ENCODE measurements at regions of chr1 and their contacts with region 1.

Region 1: DNA sequence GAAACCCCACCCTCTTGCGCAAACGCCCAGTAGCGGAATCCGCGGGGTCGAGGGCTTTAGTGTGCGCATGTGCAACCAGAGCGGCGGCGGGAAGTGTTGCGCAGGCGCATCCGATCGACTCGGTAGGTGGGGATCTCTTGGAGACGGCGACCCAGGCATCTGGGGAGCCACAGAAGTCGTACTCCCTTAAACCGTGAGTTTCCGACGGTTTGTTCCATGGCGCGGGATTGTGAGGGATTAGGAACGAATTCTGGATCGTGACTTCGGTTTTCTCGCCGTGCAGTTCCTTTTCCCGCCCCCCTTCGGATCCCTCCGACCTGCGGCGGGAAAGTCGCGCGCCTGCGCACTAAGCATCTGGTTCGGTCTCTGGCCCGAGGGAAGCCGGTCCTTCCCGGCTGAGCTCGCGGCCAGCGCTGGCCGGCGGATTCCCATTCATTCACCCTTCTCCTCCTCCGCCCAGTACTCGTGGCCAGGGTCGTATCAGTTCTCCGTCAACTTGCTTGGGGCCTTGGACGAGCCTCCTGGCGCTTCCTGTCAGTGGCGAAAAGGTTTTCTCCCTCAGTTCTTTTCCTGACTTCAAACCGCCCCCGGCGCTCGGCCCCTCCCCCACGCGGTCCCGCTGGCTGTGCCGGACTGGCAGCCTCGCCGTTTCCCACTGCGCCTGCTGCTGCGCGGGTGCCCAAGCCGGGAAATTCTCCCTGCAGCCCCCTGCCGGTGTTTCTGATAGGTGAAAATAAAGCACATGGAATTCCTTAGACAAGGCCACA is at the start of gene CDC7:
- DNase-seq: peak; percentile 87
- ATAC-seq: peak; percentile 92
- H3K4me3 ChIP-seq: peak within 1 kb of the TSS; percentile 59
- H3K27ac ChIP-seq: peak within 1 kb of the TSS; percentile 66
- H3K4me1 ChIP-seq: no peaks in the 10 kb centered on the region; the same call in 1 of the 2 replicates
- H3K27me3 ChIP-seq: no peaks in the 10 kb centered on the region
- CTCF ChIP-seq: peak; percentile 40
- POLR2A ChIP-seq: 0 out of 2 replicates have a peak, but pooled peaks have one; percentile 42
- RAD21 ChIP-seq: peak; percentile 25
- total RNA-seq, gene CDC7: 4.7 and 6.9 TPM in 2 replicates

Region 2: DNA sequence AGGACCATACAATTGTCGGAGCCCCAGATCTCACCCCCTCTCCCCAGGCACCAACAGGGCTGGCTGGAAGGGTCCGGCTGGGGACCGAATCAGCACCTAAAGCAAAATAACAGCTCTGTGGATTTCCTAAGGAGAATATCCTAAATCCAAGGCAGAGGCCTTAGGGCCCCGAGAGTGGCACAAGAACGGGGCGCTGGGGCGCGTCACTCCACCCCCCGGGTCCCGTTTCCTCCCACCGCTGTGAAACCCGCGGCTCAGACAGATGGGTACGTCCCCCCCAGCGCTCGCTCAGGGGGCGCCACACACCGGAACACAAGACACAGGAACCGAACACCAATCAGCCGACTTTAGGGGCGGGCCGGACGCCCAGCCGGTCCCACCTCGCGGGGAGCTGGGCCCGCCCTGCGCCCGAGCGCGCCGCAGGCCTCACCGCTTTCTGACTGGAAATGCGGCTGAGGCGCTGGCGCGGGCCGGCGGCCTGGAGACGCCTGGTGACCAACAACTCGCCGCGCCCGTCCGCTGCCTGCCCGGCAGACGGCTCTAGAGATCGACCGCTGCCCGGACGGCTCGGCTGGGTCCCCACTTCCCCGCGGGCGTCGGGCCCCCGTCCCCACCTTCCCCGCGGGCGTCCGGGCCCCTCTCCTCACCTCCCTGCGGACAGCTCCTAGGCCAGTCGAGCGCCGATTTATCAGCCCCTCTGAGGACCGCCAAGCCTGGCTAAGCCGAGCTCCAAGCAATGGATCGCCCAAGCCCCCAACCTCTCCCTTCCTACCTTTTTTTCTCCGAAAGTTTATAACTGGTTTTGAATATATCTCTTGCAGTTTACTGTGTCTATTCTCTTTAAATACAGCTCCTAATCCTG is 96.6 kb before region 1 on chr1 and contains the start of gene HFM1:
- CTCF ChIA-PET with region 1: no interaction called
- POLR2A ChIA-PET with region 1: no interaction called
- dilution Hi-C with region 1: no loop called
- in situ Hi-C with region 1: no loop called
- intact Hi-C with region 1: loop called (anchors 1 kb)
- DNase-seq: peak; percentile 69
- ATAC-seq: peak; percentile 99
- H3K4me3 ChIP-seq: peak within 1 kb of the TSS; percentile 52
- H3K27ac ChIP-seq: no peak within 1 kb of the TSS; the same call in 1 of the 2 replicates
- H3K4me1 ChIP-seq: no peaks in the 10 kb centered on the region
- H3K27me3 ChIP-seq: no peaks in the 10 kb centered on the region; the same call in 1 of the 2 replicates
- CTCF ChIP-seq: no peak
- POLR2A ChIP-seq: no peak
- RAD21 ChIP-seq: no peak
- total RNA-seq, gene HFM1: 0.18 and 0.83 TPM in 2 replicates

Region 3: GRCh38 chr1:92298573-92299476 is 797.9 kb after region 1 on chr1 and contains the starts of genes GLMN and RPAP2:
- CTCF ChIA-PET with region 1: no interaction called
- POLR2A ChIA-PET with region 1: no interaction called
- dilution Hi-C with region 1: no loop called
- in situ Hi-C with region 1: no loop called
- intact Hi-C with region 1: loop called (anchors 5 kb)
- DNase-seq: peak; percentile 81
- ATAC-seq: peak; percentile 99
- H3K4me3 ChIP-seq: peak within 1 kb of the TSS; percentile 90
- H3K27ac ChIP-seq: peak within 1 kb of the TSS; percentile 96
- H3K4me1 ChIP-seq: no peaks in the 10 kb centered on the region; the same call in 1 of the 2 replicates
- H3K27me3 ChIP-seq: no peaks in the 10 kb centered on the region
- CTCF ChIP-seq: peak; percentile 16; the same call in 1 of the 2 replicates
- POLR2A ChIP-seq: peak; percentile 74; the same call in 1 of the 2 replicates
- RAD21 ChIP-seq: no peak
- total RNA-seq, gene GLMN: 4.1 and 11.9 TPM in 2 replicates
- total RNA-seq, gene RPAP2: 13.6 TPM in 2 replicates

Measured in IMR-90 (cell line).